ENCODE measurements at regions of chr4 and their contacts with region 1.

Region 1: DNA sequence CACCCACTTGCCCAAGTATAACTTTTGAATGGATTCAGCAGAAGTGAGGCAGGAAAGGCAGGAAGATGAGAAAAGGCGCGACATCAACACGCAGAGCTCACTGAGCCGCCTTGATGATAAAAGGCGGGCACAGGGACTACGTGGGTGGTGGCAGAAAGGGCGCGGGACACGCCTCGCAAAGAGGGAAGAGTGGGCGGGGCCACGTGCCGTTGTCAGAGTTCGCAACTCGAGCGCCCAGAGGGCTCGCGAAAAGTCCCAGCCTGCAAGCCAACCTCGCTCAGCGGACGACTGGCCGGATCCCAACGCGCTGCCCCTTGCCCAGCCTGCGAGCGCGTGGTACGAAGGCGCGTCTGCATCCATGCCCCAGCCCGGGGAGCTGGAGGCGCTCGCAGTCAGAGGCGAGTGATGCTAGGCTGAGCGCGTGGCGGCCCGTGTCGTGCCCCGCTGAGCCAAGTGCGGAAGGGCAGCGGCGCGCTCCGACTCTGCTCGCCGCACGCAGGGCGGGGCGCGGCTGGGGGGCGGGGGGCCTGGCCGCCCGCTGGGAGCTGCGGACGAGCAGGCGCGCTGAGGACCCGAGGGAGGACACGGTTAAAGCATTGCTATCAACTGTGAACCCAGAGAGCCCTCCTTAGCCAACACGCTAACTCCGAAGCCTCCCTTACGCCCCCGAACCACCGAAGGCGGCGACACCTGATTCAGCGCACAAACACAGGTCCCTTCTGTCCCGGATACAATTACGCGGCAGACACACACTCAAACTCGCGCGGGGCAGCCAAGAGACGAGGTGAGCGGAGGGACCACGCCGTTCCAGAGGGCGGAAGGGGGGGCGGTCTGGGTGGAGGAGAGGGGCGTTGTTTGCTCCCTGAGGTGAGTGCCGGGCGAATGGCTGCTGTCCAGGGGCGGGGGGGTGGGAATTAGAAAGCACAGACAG is at the start of gene UGT8:
- DNase-seq: peak; percentile 56 to 82 (median 76)
- H3K4me3 ChIP-seq: peak within 1 kb of the TSS; percentile 52 to 86 (median 72)
- H3K27ac ChIP-seq: peak within 1 kb of the TSS; percentile 8 to 98 (median 92)
- H3K27me3 ChIP-seq: peaks cover 0 to 19% (median 0%) of the 10 kb centered on the region in 45 donors
- CTCF ChIP-seq: peak in 11 of 56 donors; percentile 12 to 41 (median 20)
- total RNA-seq, gene UGT8: 13.0 to 301 (median 73.0) TPM

Region 2: DNA sequence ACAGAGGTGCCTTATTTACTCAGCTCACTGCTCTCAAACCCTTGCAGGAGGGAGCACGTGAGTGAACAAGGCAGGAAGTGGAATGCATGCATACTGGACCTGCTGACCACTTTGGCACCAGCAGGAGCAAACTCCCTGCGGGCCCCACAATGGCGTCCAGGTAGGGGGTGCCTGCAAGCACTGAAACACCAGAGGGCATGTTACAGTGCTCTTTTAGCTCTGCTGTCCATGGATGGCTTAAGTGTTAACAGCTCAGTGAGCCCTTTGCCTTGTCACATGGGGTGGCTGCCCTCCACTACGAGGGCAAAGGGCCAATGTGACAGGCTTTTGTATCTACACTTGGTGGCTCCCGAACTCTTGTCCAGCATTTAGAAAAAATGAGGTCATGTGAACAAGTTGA is 199.4 kb before region 1 on chr4:
- intact Hi-C with region 1: loop called in 1 of 2 experiments (anchors 10 kb)
- DNase-seq: no peak
- H3K4me3 ChIP-seq: no peak overlapping the region
- H3K27ac ChIP-seq: no peak overlapping the region
- H3K27me3 ChIP-seq: peaks cover 0 to 7% (median 0%) of the 10 kb centered on the region in 45 donors
- CTCF ChIP-seq: no peak

Region 3: DNA sequence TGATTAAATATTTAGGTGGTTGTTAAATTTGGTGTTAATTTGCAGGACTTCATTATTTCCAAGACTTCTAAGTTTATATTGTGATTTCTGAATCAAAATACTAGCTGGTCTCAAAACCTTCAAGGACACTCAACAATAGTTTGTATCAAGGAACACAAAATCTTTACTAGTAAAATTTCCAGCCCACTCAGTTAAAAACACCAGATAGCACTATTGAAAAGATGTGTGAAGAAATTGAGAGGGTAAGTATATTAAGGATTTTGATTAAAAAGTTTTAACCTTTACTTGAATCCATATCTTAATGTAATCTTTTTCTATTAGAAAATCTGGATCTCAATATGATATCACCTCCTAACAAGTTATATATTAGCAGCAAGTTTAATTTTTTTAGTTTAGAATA is 89.1 kb before region 1 on chr4:
- intact Hi-C with region 1: loop called in 1 of 2 experiments (anchors 5 kb)
- DNase-seq: no peak
- H3K4me3 ChIP-seq: no peak overlapping the region
- H3K27ac ChIP-seq: peak overlapping the region in 5 of 59 donors; percentile 16 to 67 (median 52)
- H3K27me3 ChIP-seq: peaks cover 0 to 5% (median 0%) of the 10 kb centered on the region in 45 donors
- CTCF ChIP-seq: peak in 49 of 56 donors; percentile 24 to 73 (median 46)

Region 4: GRCh38 chr4:114535725-114536124 is 62.7 kb before region 1 on chr4:
- intact Hi-C with region 1: loop called (anchors 5 to 10 kb)
- DNase-seq: no peak
- H3K4me3 ChIP-seq: peak overlapping the region in 3 of 59 donors; percentile 2 to 14 (median 3)
- H3K27ac ChIP-seq: peak overlapping the region in 58 of 59 donors; percentile 19 to 97 (median 86)
- H3K27me3 ChIP-seq: no peaks in the 10 kb centered on the region
- CTCF ChIP-seq: peak in 2 of 56 donors; percentile 14 to 20

Region 5: GRCh38 chr4:114659386-114660008 is 61.0 kb after region 1 on chr4:
- intact Hi-C with region 1: loop called (anchors 1 to 2 kb)
- DNase-seq: peak; percentile 55 to 91 (median 78)
- H3K4me3 ChIP-seq: peak overlapping the region in 34 of 59 donors; percentile 1 to 50 (median 23)
- H3K27ac ChIP-seq: peak overlapping the region in 57 of 59 donors; percentile 40 to 99 (median 84)
- H3K27me3 ChIP-seq: peaks cover 0 to 7% (median 0%) of the 10 kb centered on the region in 45 donors
- CTCF ChIP-seq: peak; percentile 72 to 96 (median 89)